ENCODE measurements at regions of chr16 and their contacts with region 1.

Region 1: DNA sequence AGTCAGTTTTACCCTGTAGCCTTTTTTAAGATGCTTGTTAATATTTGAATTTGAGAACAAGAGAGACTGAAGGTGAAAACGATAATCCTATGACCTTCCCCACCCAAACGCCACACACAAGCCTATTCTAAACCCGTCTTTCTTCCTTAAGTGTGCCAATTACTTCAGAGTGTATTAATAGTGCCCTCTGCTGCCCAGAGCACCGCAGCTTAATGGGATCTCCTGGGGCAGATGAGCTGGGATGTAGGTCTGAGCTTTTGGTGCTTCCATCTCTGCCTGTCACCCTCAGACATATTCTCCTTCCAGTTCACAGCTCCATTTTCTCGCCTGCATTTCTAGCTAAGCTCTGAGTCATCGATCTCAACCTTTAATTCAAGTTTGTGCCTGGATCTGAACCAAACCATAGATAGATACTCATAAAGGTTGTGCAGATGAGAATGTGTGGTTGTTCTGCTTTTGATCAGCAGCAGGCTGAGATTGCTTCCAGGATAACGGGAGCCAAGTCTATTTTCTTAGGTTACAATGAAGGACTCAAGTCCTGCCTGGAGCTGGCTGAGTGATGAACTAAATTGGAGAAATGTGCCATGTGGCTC is 46.4 kb upstream of the CDH13 start:
- DNase-seq: peak; percentile 8
- H3K4me3 ChIP-seq: no peak overlapping the region
- H3K27ac ChIP-seq: no peak overlapping the region
- H3K4me1 ChIP-seq: no peaks in the 10 kb centered on the region
- H3K27me3 ChIP-seq: no peaks in the 10 kb centered on the region
- CTCF ChIP-seq: peak; percentile 51 to 54

Region 2: GRCh38 chr16:82368041-82368440 is 212.4 kb before region 1 on chr16:
- CTCF ChIA-PET with region 1: interaction called, 4 read pairs
- dilution Hi-C with region 1: no loop called
- in situ Hi-C with region 1: no loop called
- intact Hi-C with region 1: loop called (anchors 1 kb)
- DNase-seq: peak; percentile 12
- H3K4me3 ChIP-seq: no peak overlapping the region
- H3K27ac ChIP-seq: no peak overlapping the region
- H3K4me1 ChIP-seq: no peaks in the 10 kb centered on the region
- H3K27me3 ChIP-seq: peaks cover 7% of the 10 kb centered on the region
- CTCF ChIP-seq: peak; percentile 43 to 57

Region 3: DNA sequence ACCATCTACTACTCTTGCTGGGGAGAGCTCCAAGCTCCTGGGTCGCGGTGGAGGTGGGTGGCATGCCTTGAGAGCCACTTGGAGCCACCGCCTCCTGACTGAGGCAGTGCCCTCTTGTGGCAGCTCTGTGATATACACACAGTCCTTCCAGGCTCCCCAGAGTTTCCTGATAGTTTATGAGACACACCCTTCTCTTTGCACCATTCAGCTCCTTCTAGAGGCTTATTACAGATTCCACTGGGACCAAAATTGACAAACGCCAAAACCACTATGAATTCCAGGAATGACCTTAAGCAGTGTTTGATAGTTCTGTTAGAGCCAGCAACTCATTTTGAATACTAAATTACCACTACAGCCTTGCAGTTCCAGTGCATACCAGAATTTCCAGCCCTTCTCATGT is 123.7 kb before region 1 on chr16:
- CTCF ChIA-PET with region 1: no interaction called
- dilution Hi-C with region 1: no loop called
- in situ Hi-C with region 1: no loop called
- intact Hi-C with region 1: loop called (anchors 2 kb)
- DNase-seq: peak; percentile 46
- H3K4me3 ChIP-seq: no peak overlapping the region
- H3K27ac ChIP-seq: no peak overlapping the region
- H3K4me1 ChIP-seq: no peaks in the 10 kb centered on the region
- H3K27me3 ChIP-seq: peaks cover 6% of the 10 kb centered on the region
- CTCF ChIP-seq: peak; percentile 80 to 84

Measured in mammary epithelial cell (primary cell).